MCF 10A (cell line): ENCODE measurements at regions of chr14 and their contacts with region 1.

Region 1: DNA sequence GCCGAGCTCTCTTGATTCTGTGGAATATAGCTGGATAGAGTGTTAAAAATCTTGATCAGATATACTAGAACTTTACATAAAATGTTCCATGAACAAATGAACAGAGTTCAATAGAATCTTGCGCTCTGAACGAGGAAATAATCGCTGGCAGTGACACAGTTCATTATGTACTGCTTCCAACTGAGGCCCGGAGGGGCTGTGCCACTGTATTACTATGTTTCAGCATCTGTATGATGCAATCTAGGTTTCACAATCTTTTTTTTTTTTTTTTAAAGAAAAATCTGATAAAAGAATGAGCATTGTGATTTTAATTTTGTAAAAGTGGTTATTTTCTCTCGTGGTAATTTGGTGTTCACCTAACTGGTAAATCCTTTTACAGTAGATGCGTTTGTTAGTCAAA is 77.2 kb downstream of the FERMT2 start:
- DNase-seq: peak; percentile 79
- H3K4me3 Mint-ChIP-seq: peak overlapping the region; percentile 57
- H3K27ac Mint-ChIP-seq: peak overlapping the region; percentile 96
- H3K4me1 Mint-ChIP-seq: peaks cover 49% of the 10 kb centered on the region
- H3K27me3 Mint-ChIP-seq: no peaks in the 10 kb centered on the region
- CTCF ChIP-seq: no peak

Region 2: DNA sequence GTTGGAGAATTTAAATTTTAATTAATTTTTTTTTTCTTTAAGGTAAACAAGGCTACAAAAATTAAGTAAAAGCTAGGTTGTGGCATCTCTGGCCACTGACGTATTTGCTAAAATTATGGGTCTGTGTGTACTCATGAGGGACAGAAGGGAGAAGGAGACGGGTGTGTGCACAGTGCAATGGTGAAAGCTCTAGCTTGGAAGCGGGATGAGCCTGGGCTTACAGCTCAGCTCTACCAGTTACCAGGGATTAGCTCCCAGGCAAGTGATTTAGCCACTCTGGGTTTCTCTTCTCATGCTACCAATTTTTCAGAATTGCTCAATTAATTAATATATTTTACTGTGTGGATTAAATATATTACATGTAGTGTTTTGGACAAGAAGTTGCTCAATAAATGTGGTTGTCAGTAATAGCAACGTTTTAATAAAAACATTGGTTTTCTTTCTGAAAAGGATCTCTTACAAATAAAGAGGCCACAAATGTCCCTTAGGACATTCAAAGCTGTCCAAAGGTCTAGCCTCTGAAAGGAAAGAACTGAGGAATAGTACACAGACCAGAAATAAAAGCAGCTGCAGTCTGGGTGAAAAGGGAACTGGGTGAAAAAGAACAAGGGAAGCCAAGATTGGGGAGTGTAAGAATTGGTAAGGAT is 15.3 kb after region 1 on chr14:
- CTCF ChIA-PET with region 1: no interaction called
- POLR2A ChIA-PET with region 1: interaction called, 12 read pairs
- intact Hi-C with region 1: no loop called
- DNase-seq: no peak
- H3K4me3 Mint-ChIP-seq: no peak overlapping the region
- H3K27ac Mint-ChIP-seq: no peak overlapping the region
- H3K4me1 Mint-ChIP-seq: peaks cover under 1% of the 10 kb centered on the region
- H3K27me3 Mint-ChIP-seq: no peaks in the 10 kb centered on the region
- CTCF ChIP-seq: no peak

Region 3: GRCh38 chr14:52900723-52901122 is 27.0 kb after region 1 on chr14:
- CTCF ChIA-PET with region 1: interaction called, 3 read pairs
- POLR2A ChIA-PET with region 1: interaction called, 28 read pairs
- intact Hi-C with region 1: no loop called
- DNase-seq: peak; percentile 33
- H3K4me3 Mint-ChIP-seq: peak overlapping the region; percentile 40
- H3K27ac Mint-ChIP-seq: peak overlapping the region; percentile 42
- H3K4me1 Mint-ChIP-seq: peaks cover 39% of the 10 kb centered on the region
- H3K27me3 Mint-ChIP-seq: no peaks in the 10 kb centered on the region
- CTCF ChIP-seq: no peak

Region 4: GRCh38 chr14:52918486-52918885 is 44.8 kb after region 1 on chr14:
- CTCF ChIA-PET with region 1: interaction called, 3 read pairs
- POLR2A ChIA-PET with region 1: interaction called, 5 read pairs
- intact Hi-C with region 1: loop called (anchors 5 kb)
- DNase-seq: peak; percentile 62
- H3K4me3 Mint-ChIP-seq: no peak overlapping the region
- H3K27ac Mint-ChIP-seq: peak overlapping the region; percentile 73
- H3K4me1 Mint-ChIP-seq: peaks cover 50% of the 10 kb centered on the region
- H3K27me3 Mint-ChIP-seq: no peaks in the 10 kb centered on the region
- CTCF ChIP-seq: no peak